ENCODE measurements at regions of chr17 and their contacts with region 1.

Region 1: DNA sequence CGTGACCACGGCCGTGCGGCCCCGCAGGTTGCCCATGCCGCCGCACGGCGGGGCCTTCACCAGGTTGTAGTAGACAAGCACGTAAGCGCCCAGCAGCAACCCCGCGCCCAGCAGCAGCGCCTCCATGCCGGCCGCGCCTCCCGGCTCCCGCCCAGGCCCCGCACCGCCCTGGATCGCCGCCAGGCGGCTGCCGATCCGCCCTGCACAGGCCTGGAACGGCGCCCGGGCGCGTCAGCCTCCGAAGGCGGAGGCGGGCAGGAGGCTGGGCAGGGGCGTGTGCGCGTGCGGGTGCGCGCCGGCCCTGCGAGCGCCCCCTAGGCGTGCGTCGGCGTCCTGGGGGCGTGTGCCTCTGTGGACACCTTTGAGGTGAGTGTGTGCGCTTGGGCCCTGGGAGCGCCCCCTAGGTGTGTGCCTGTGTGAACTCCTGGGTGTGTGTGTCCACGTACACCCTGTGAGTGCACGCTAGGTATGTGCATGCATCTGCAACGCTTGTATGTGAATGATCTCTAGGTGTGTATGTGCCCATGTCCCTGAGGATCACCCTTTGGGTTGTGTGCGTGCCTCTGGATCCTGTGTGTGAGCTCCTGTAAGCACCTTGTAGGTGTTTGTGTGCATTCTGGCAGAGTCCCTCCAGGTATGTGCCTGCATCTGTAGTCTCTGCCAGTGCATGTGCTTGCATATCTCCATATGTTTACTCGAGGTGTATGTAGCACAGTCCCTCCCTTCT is at the start of gene DHRS13:
- DNase-seq: peak; percentile 93
- H3K4me3 Mint-ChIP-seq: peak within 1 kb of the TSS; percentile 88
- H3K27ac Mint-ChIP-seq: peak within 1 kb of the TSS; percentile 89
- H3K4me1 Mint-ChIP-seq: peaks cover 45% of the 10 kb centered on the region
- H3K27me3 Mint-ChIP-seq: no peaks in the 10 kb centered on the region
- total RNA-seq, gene DHRS13: 26.8 to 27.8 TPM

Region 2: GRCh38 chr17:28871056-28871579 is 31.9 kb before region 1 on chr17:
- CTCF ChIA-PET with region 1: interaction called, 14 read pairs
- POLR2A ChIA-PET with region 1: no interaction called
- DNase-seq: peak; percentile 61
- H3K4me3 Mint-ChIP-seq: no peak overlapping the region
- H3K27ac Mint-ChIP-seq: peak overlapping the region; percentile 93
- H3K4me1 Mint-ChIP-seq: peaks cover 14% of the 10 kb centered on the region
- H3K27me3 Mint-ChIP-seq: no peaks in the 10 kb centered on the region

Region 3: DNA sequence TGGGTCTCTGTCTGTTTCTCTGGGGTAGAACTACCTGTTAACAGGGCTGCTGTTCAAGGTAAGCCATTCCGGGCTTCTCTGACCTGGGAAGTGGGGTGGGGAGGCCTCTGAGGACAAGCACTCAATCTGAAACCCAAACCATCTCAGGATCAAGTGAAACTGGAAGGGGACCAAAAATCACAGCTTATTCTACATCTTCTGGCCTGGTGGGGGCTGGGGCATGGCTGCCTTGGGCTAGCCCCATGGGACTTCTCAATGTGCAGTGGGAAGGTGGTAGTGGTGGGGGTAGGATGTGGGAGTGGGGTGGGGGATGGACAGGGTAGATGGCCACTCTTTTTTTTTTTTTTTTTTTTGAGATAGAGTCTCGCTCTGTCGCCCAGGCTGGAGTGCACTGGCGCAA is 11.0 kb before region 1 on chr17:
- CTCF ChIA-PET with region 1: interaction called, 24 read pairs
- POLR2A ChIA-PET with region 1: no interaction called
- DNase-seq: no peak
- H3K4me3 Mint-ChIP-seq: no peak overlapping the region
- H3K27ac Mint-ChIP-seq: peak overlapping the region; percentile 83
- H3K4me1 Mint-ChIP-seq: peaks cover 60% of the 10 kb centered on the region
- H3K27me3 Mint-ChIP-seq: no peaks in the 10 kb centered on the region

Region 4: GRCh38 chr17:28916302-28916934 is 13.4 kb after region 1 on chr17:
- CTCF ChIA-PET with region 1: interaction called, 24 read pairs
- POLR2A ChIA-PET with region 1: no interaction called
- DNase-seq: peak; percentile 49
- H3K4me3 Mint-ChIP-seq: no peak overlapping the region
- H3K27ac Mint-ChIP-seq: no peak overlapping the region
- H3K4me1 Mint-ChIP-seq: peaks cover 5% of the 10 kb centered on the region
- H3K27me3 Mint-ChIP-seq: no peaks in the 10 kb centered on the region